ENCODE measurements at regions of chr16 and their contacts with region 1.

Region 1: GRCh38 chr16:10616730-10617555 is 36.5 kb upstream of the EMP2 start:
- DNase-seq: peak; percentile 82 to 88 (median 88)
- ATAC-seq: peak; percentile 78 to 91
- H3K4me3 ChIP-seq: no peak overlapping the region
- H3K27ac ChIP-seq: peak overlapping the region; percentile 8
- H3K4me1 ChIP-seq: peaks cover 5% of the 10 kb centered on the region
- H3K27me3 ChIP-seq: no peaks in the 10 kb centered on the region

Region 2: DNA sequence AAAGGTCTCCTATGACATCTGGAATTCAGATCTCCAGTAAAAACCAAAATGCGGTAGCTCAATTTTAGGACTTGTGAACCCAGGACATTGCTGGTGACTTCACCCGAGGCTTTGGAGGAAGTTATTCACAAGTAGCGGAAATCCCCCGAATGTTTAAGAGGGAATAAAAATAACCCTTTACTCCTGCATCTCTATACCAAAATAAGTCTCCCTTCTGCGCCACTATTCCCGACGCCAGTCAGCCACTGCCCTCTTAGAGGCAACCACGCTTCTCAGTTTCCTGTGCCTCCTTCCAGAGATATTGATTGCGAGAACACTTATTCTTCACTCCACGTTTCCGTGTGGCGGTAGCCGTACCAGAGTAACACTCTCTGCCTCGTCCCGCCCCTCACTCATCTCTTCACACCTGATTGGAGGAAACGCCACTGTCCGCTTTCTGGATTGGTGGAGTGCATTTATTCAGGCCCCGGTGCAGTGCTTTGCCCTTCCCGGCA is 63.9 kb before region 1 on chr16:
- intact Hi-C with region 1: loop called in 1 of 4 experiments (anchors 10 kb)
- DNase-seq: peak; percentile 59 to 83 (median 81)
- ATAC-seq: peak; percentile 89 to 90
- H3K4me3 ChIP-seq: peak overlapping the region; percentile 63
- H3K27ac ChIP-seq: peak overlapping the region; percentile 95
- H3K4me1 ChIP-seq: peaks cover 5% of the 10 kb centered on the region
- H3K27me3 ChIP-seq: no peaks in the 10 kb centered on the region

Region 3: DNA sequence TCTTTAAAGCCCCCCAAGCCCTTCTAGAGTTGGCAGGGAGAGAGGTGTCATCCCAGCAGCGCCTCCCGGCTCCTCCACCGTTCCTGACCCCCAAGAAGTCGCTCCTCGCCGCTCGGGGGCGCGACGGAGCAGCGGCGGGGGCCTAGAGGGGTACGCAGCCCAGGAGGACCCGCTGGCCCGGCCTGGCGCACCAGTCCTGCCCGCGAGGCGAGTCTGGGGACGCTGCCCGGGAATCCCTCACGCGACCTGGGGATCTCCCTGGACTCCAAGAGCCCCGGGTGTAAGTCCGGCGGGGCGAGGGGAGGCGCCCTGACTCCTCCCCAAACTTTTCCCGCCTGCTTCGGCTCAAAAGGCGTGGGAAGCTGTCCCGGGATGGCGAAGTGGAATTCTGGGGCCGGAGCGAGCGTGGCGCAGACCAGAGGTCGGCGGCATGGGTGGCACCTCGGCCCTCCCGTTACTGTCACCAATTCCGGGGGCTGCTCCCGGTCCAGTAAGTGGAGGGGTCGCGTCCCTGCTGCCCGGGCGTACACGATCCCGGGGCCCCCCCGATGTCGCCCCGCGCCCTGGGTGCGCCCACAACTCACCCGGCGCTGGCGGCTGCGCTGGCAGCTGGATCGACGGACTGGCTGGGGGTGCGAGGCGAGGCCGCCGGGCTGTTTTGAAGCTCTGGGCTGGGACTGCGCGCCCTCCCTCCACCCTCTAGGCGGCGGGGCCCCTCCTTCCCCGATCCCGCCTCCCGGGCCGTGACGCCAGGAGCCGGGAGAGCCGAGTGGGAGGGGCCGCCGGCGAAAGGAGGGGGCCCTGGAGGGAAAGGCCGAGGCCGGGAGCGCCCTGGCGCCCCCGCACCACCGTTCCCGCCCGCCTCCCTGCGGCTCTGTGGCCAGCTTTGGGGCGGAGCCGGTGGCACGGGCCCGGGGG is 36.7 kb before region 1 on chr16 and contains the start of gene EMP2:
- intact Hi-C with region 1: loop called in 2 of 4 experiments (anchors 2 to 5 kb)
- DNase-seq: peak; percentile 88 to 95 (median 94)
- ATAC-seq: peak; percentile 93 to 94
- H3K4me3 ChIP-seq: peak within 1 kb of the TSS; percentile 63
- H3K27ac ChIP-seq: peak within 1 kb of the TSS; percentile 85
- H3K4me1 ChIP-seq: peaks cover 15% of the 10 kb centered on the region
- H3K27me3 ChIP-seq: no peaks in the 10 kb centered on the region
- total RNA-seq, gene EMP2: 66.0 to 85.0 (median 74.3) TPM

Region 4: DNA sequence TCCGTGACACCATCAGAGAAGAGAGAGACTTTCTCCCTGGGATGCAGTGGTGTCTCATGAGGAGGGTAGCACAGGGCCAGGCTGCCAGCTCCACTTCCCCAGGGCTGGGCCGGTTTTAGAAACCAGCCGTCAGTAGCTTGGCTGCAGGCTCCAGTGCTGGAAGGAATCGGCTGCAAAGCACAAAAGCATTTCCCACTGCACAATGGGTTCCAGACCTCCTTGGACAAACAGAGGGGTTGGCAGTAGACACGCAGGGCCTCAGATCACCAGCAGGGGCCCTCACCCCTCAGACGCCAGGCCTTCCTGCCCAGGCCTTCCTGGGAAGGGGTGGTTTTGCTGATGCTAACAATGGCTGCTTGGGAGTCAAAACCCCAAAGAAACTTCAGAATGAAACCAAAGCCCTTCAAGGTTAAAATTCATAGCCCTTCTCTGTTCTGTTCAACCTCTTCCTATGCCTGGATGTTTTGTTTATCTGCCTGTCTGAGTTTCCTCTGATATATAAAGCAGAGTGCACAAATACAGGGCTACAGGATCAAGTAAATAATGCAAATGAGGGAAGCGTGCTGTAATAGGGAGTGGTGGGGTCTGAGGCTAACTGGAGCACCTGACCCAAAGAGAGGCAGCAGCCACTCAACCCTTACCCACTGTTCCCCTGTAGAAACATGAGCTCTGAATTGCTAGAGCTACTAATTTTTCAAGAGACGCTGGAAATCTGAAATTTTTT is 51.5 kb after region 1 on chr16:
- intact Hi-C with region 1: loop called in 1 of 4 experiments (anchors 5 kb)
- DNase-seq: peak in 2 of 3 donors; percentile 58 to 80
- ATAC-seq: peak; percentile 79 to 82
- H3K4me3 ChIP-seq: no peak overlapping the region
- H3K27ac ChIP-seq: no peak overlapping the region
- H3K4me1 ChIP-seq: peaks cover 2% of the 10 kb centered on the region
- H3K27me3 ChIP-seq: no peaks in the 10 kb centered on the region

Measured in right cardiac atrium (tissue), 5 donors.